Mammary epithelial cell (primary cell): ENCODE measurements at regions of chr12 and their contacts with region 1.

Region 1: DNA sequence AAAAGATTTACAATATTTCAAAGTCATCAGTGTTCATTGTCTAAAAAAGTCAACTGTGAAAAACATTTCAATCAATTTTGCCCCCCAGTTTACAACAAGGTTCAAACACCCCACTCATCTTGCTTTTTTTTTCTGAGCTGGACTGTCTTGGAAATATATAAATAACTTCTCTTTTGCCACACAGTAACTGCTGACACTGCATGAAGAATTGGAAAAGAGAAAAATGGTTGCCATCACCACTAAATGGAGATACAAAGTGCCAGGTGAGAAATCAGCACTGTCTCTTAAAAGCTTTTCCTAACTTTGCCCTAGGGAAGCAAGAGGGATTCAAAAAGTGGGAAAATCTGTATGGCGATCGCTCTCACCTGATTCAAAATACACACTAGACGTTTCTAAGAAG is 101.4 kb downstream of the TRAFD1 start:
- DNase-seq: no peak
- H3K4me3 ChIP-seq: no peak overlapping the region
- H3K27ac ChIP-seq: no peak overlapping the region
- H3K4me1 ChIP-seq: no peaks in the 10 kb centered on the region
- H3K27me3 ChIP-seq: no peaks in the 10 kb centered on the region
- CTCF ChIP-seq: no peak

Region 2: DNA sequence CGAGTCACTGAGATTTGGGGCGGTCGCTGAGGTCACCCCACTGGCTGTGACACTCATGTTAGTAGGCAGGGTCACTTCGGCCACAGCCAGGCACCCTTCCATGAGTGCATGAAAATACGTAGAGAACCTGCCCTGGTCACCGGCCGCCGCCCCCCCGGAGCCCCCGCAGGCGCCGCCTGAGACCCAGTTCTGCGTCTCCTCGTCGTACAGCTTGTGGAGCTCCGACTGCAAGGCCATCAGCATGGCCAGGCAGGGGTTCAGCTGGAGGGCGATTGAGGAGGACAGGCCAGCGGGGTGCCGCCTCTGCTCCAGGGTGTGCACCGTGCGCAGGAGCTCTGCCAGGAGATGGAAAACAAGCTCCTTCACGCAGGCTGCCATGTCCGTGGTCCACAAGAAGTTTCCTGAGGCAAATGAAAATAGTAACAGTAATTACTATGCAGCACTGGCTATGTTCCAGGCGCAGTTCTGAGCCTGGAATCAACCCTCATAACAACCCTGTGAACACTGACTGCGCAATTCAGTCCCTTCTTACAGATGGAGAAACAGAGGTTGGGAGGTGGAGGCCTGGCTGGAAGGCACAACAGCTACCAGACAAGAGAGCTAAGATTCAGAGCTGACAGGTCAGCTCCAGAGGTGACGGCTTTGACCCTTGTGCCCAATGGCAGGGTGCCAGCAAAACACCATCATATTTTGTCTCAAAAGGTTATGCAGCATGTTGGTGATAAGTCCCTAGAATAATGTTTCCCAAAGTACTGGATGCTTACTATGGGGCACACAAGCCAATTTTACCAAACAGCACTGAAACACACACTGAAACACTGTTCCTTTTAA is 41.5 kb before region 1 on chr12:
- CTCF ChIA-PET with region 1: no interaction called
- dilution Hi-C with region 1: loop called (anchors 5 kb)
- in situ Hi-C with region 1: no loop called
- intact Hi-C with region 1: no loop called
- DNase-seq: no peak
- H3K4me3 ChIP-seq: no peak overlapping the region
- H3K27ac ChIP-seq: no peak overlapping the region
- H3K4me1 ChIP-seq: peaks cover 12% of the 10 kb centered on the region
- H3K27me3 ChIP-seq: no peaks in the 10 kb centered on the region
- CTCF ChIP-seq: no peak